Right ventricle myocardium inferior (tissue), 1 donor: ENCODE measurements at regions of chr2 and their contacts with region 1.

Region 1: GRCh38 chr2:215711471-215712034 is 275.7 kb upstream of the FN1 start:
- DNase-seq: no peak
- ATAC-seq: peak; percentile 33

Region 2: DNA sequence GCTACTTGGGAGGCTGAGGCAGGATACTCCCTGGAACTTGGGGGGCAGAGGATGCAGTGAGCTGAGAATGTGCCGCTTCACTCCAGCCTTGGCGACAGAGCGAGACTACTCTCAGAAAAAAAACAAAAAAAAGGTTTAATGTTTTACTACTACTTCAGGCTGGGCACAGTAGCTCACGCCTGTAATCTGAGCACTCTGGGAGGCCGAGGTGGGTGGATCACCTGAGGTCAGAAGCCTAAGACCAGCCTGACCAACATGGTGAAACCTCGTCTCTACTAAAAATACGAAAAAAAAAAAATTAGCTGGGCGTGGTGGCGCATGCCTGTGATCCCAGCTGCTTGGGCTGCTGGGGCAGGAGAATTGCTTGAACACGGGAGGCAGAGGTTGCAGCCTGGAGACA is 475.4 kb before region 1 on chr2:
- intact Hi-C with region 1: no loop called
- DNase-seq: no peak
- ATAC-seq: no peak

Region 3: DNA sequence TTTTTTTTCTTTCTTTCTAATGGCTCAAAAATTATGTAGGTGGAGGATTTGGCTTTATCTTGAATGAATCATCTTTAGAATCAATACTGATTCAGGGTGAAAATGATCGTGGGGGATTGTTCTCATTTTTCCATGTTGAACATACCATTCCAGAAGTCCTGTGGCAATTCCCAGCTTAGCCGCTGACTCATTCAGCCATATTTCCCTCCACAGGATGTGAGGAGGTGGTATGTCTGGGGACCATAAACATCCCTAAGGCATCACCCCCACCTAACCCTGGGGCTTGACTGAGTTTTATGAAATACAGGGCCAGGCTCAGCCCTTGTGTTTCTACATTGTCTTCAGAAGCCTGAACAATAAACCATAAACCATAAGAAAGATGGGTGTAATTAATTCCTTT is 183.0 kb before region 1 on chr2:
- intact Hi-C with region 1: no loop called
- DNase-seq: no peak
- ATAC-seq: no peak

Region 4: GRCh38 chr2:215758691-215759090 is 47.1 kb after region 1 on chr2:
- intact Hi-C with region 1: loop called (anchors 2 kb)
- DNase-seq: no peak
- ATAC-seq: peak; percentile 31